ENCODE measurements at regions of chrX and their contacts with region 1.

Region 1: GRCh38 chrX:14029425-14030173 is at the start of gene GEMIN8:
- DNase-seq: no peak
- H3K4me3 ChIP-seq: peak within 1 kb of the TSS; percentile 50 to 57
- H3K27ac ChIP-seq: peak within 1 kb of the TSS; percentile 71
- H3K4me1 ChIP-seq: peaks cover 9% of the 10 kb centered on the region
- H3K27me3 ChIP-seq: no peaks in the 10 kb centered on the region
- CTCF ChIP-seq: peak in 1 of 3 experiments; percentile 21
- POLR2A ChIP-seq: peak in 1 of 2 donors; percentile 33
- total RNA-seq, gene GEMIN8: 16.5 TPM

Region 2: DNA sequence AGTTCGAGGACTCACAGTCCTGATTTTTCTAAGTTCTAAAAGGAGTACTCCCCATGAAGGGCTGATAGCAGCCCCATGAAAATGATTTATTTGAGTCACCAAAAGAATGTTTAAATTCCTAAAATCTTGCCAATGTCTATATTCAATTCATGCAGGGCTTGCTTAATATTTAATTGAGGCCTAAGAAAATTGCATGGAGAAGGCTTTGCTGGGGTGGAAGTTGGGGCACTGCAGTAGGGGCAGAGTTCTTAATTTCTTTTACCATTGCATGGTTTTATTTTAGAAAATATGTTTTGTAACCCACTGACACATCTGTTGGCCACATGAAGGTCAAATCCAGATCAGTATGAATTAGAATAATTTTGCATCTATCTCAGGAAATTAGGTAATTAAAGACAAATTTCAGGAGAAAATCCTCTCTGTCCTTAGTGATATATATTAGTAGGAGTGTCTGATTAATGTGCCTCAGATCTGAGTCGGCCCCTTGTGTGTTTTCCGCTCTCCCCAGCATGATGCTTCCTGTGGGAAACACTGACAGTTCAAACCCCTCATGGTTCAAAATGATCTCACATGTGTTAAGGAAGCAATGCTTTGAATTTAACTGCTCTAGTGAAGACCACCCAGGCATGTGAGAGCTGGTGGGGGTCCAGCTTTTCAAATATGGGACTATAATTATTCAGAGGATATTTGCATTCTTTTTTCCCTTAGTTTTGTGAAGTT is 514.2 kb before region 1 on chrX:
- intact Hi-C with region 1: loop called (anchors 10 kb)
- DNase-seq: no peak
- H3K4me3 ChIP-seq: no peak overlapping the region
- H3K27ac ChIP-seq: no peak overlapping the region
- H3K4me1 ChIP-seq: no peaks in the 10 kb centered on the region
- H3K27me3 ChIP-seq: no peaks in the 10 kb centered on the region
- CTCF ChIP-seq: no peak
- POLR2A ChIP-seq: no peak

Region 3: GRCh38 chrX:13662355-13662791 is 367.2 kb before region 1 on chrX:
- intact Hi-C with region 1: loop called (anchors 5 kb)
- DNase-seq: no peak
- H3K4me3 ChIP-seq: peak overlapping the region in 1 of 2 donors; percentile 13
- H3K27ac ChIP-seq: no peak overlapping the region
- H3K4me1 ChIP-seq: peaks cover 9% of the 10 kb centered on the region
- H3K27me3 ChIP-seq: no peaks in the 10 kb centered on the region
- CTCF ChIP-seq: no peak
- POLR2A ChIP-seq: no peak

Region 4: GRCh38 chrX:13750204-13750603 is 279.4 kb before region 1 on chrX:
- intact Hi-C with region 1: loop called (anchors 5 kb)
- DNase-seq: no peak
- H3K4me3 ChIP-seq: no peak overlapping the region
- H3K27ac ChIP-seq: no peak overlapping the region
- H3K4me1 ChIP-seq: no peaks in the 10 kb centered on the region
- H3K27me3 ChIP-seq: no peaks in the 10 kb centered on the region
- CTCF ChIP-seq: peak in 2 of 3 experiments; percentile 14 to 41
- POLR2A ChIP-seq: no peak

Region 5: GRCh38 chrX:13994104-13994503 is 35.5 kb before region 1 on chrX:
- intact Hi-C with region 1: no loop called
- DNase-seq: no peak
- H3K4me3 ChIP-seq: peak overlapping the region in 1 of 2 donors; percentile 13
- H3K27ac ChIP-seq: no peak overlapping the region
- H3K4me1 ChIP-seq: no peaks in the 10 kb centered on the region
- H3K27me3 ChIP-seq: no peaks in the 10 kb centered on the region
- CTCF ChIP-seq: no peak
- POLR2A ChIP-seq: no peak

Measured in vagina (tissue), 2 donors.